CD4-positive, alpha-beta T cell (primary cell): ENCODE measurements at regions of chr11 and their contacts with region 1.

Region 1: GRCh38 chr11:269146-269890 is 8.9 kb upstream of the NLRP6 start:
- DNase-seq: peak in 12 of 14 experiments; percentile 29 to 89 (median 51)
- ATAC-seq: peak; percentile 76
- H3K4me3 ChIP-seq: peak overlapping the region; percentile 56
- H3K4me3 Mint-ChIP-seq: peak overlapping the region; percentile 91
- H3K27ac ChIP-seq: peak overlapping the region; percentile 74 to 84
- H3K27ac Mint-ChIP-seq: peak overlapping the region; percentile 94
- H3K4me1 ChIP-seq: peaks cover 34% of the 10 kb centered on the region
- H3K4me1 Mint-ChIP-seq: peaks cover 33% of the 10 kb centered on the region
- H3K27me3 ChIP-seq: no peaks in the 10 kb centered on the region
- H3K27me3 Mint-ChIP-seq: no peaks in the 10 kb centered on the region
- CTCF ChIP-seq: no peak

Region 2: DNA sequence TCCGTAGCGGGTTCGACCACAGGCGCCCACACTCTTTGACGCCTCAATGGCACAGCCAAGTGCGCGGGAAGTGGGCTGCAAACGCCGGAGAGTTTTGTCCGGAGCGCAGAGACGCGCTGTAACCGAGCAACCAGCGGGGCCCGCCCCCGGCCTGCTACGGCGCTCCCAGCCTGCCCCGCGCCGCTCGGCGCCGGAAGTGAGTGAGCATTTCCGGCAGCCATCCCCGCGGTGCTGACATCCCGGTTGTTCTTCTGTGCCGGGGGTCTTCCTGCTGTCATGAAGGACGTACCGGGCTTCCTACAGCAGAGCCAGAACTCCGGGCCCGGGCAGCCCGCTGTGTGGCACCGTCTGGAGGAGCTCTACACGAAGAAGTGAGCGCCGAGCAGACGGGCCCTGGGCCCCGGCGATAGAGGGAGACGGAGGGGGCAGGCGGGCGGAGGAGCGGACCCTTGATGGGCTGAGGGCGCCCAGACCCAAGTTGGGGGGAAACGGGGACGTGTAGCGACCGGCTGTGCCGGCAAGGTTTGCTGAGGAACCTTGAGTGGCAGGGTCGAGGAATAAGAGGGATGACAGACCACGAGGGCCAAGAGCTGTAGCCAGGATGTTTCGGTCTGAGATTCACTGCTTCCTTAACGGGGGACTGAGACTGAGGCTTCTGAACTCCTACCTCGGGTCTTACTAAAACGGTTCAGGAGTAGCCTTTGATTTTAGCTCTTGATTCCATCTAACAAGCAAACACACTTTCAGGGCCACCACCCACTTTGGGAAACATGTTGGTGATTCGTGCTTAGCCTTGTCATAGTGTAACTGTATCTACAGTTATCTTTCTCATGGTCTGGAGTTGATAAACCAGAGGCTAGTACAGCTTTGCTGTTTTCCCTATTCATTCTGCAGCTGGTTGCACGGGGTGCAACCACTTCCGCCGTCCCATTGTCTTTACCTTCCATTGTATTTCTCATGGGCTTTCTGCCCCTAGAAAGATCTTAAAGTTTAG is 32.2 kb before region 1 on chr11 and contains the start of gene PSMD13:
- CTCF ChIA-PET with region 1: interaction called, 3 read pairs
- POLR2A ChIA-PET with region 1: interaction called, 12 read pairs
- intact Hi-C with region 1: loop called in 1 of 2 experiments (anchors 1 kb)
- DNase-seq: peak; percentile 76 to 94 (median 84)
- ATAC-seq: peak; percentile 79
- H3K4me3 ChIP-seq: peak within 1 kb of the TSS; percentile 91
- H3K4me3 Mint-ChIP-seq: peak within 1 kb of the TSS; percentile 100
- H3K27ac ChIP-seq: peak within 1 kb of the TSS; percentile 97 to 100
- H3K27ac Mint-ChIP-seq: peak within 1 kb of the TSS; percentile 91
- H3K4me1 ChIP-seq: peaks cover 27% of the 10 kb centered on the region
- H3K4me1 Mint-ChIP-seq: peaks cover 55% of the 10 kb centered on the region
- H3K27me3 ChIP-seq: no peaks in the 10 kb centered on the region
- H3K27me3 Mint-ChIP-seq: no peaks in the 10 kb centered on the region
- CTCF ChIP-seq: peak; percentile 31
- total RNA-seq, gene PSMD13: 56.9 to 57.8 TPM

Region 3: DNA sequence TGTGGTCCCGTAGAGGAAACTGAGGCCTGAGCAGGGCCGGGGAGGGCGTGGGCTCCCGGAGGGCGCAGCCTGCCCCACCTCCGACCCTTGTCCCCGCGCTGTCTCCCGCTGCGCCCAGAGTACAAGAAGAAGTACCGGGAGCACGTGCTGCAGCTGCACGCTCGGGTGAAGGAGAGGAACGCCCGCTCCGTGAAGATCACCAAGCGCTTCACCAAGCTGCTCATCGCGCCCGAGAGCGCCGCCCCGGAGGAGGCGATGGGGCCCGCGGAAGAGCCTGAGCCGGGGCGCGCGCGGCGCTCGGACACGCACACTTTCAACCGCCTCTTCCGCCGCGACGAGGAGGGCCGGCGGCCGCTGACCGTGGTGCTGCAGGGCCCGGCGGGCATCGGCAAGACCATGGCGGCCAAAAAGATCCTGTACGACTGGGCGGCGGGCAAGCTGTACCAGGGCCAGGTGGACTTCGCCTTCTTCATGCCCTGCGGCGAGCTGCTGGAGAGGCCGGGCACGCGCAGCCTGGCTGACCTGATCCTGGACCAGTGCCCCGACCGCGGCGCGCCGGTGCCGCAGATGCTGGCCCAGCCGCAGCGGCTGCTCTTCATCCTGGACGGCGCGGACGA is 10.8 kb after region 1 on chr11:
- CTCF ChIA-PET with region 1: interaction called, 4 read pairs
- POLR2A ChIA-PET with region 1: interaction called, 185 read pairs
- intact Hi-C with region 1: loop called in 1 of 2 experiments (anchors 2 kb)
- DNase-seq: peak in 10 of 14 experiments; percentile 37 to 78 (median 51)
- ATAC-seq: peak; percentile 69
- H3K4me3 ChIP-seq: peak overlapping the region; percentile 53
- H3K4me3 Mint-ChIP-seq: peak overlapping the region; percentile 92
- H3K27ac ChIP-seq: no peak overlapping the region
- H3K27ac Mint-ChIP-seq: peak overlapping the region; percentile 81
- H3K4me1 ChIP-seq: peaks cover 56% of the 10 kb centered on the region
- H3K4me1 Mint-ChIP-seq: peaks cover 61% of the 10 kb centered on the region
- H3K27me3 ChIP-seq: peaks cover 10 to 18% of the 10 kb centered on the region in 2 experiments
- H3K27me3 Mint-ChIP-seq: peaks cover 12% of the 10 kb centered on the region
- CTCF ChIP-seq: no peak

Region 4: DNA sequence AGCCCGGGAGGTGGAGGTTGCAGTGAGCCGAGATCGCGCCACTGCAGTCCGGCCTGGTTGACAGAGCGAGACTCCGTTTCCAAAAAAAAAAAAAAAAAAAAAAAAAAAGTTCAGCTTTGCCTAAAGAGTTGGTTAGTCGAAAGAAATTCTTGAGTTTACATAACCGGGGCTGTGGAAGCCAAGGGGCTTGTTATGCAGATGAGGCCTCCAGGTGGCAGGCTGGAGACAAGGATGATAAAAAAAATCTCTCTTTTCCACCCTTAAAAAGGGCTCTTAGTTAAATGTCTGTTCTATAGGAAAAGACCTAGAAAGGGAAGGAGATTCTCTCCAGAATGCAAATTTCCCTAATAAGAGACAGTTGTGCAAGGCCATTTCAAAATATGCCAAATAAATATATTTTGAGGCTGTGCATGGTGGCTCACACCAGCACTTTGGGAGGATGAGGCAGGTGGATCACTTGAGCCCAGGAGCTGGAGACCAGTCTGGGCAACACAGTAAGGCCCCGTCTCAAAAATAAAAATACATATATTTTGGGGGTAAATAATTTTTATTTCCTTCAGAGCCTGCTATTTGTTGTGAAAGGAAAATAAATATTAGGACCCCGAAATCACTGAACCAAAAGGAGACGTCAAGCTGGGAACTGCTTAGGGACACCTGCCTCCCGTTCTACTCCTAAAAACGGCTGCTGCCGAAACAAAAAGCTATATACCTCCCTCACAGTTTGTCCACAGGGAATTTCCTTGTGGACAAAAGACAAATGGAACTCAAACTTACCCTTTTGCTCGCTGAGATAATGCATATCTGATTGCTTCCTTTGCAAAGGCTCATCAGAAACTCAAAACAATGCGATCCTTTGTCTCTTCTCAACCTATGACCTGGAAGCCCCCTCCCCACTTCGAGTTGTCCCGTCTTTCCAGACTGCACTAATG is 35.9 kb after region 1 on chr11:
- CTCF ChIA-PET with region 1: interaction called, 4 read pairs
- POLR2A ChIA-PET with region 1: interaction called, 12 read pairs
- intact Hi-C with region 1: loop called in 1 of 2 experiments (anchors 5 kb)
- DNase-seq: peak in 9 of 14 experiments; percentile 52 to 87 (median 63)
- ATAC-seq: peak; percentile 37
- H3K4me3 ChIP-seq: no peak overlapping the region
- H3K4me3 Mint-ChIP-seq: peak overlapping the region; percentile 85
- H3K27ac ChIP-seq: no peak overlapping the region
- H3K27ac Mint-ChIP-seq: peak overlapping the region; percentile 96
- H3K4me1 ChIP-seq: peaks cover 50% of the 10 kb centered on the region
- H3K4me1 Mint-ChIP-seq: peaks cover 39% of the 10 kb centered on the region
- H3K27me3 ChIP-seq: no peaks in the 10 kb centered on the region
- H3K27me3 Mint-ChIP-seq: no peaks in the 10 kb centered on the region
- CTCF ChIP-seq: peak; percentile 80

Region 5: GRCh38 chr11:342328-342727 is 73.0 kb after region 1 on chr11:
- CTCF ChIA-PET with region 1: no interaction called
- POLR2A ChIA-PET with region 1: no interaction called
- intact Hi-C with region 1: no loop called
- DNase-seq: no peak
- ATAC-seq: no peak
- H3K4me3 ChIP-seq: no peak overlapping the region
- H3K4me3 Mint-ChIP-seq: no peak overlapping the region
- H3K27ac ChIP-seq: no peak overlapping the region
- H3K27ac Mint-ChIP-seq: no peak overlapping the region
- H3K4me1 ChIP-seq: peaks cover 8% of the 10 kb centered on the region
- H3K4me1 Mint-ChIP-seq: peaks cover 11% of the 10 kb centered on the region
- H3K27me3 ChIP-seq: no peaks in the 10 kb centered on the region
- H3K27me3 Mint-ChIP-seq: no peaks in the 10 kb centered on the region
- CTCF ChIP-seq: no peak

Region 6: GRCh38 chr11:355581-356458 is 86.5 kb after region 1 on chr11:
- CTCF ChIA-PET with region 1: no interaction called
- POLR2A ChIA-PET with region 1: interaction called, 12 read pairs
- intact Hi-C with region 1: no loop called
- DNase-seq: peak; percentile 59 to 94 (median 88)
- ATAC-seq: peak; percentile 64
- H3K4me3 ChIP-seq: peak overlapping the region; percentile 55
- H3K4me3 Mint-ChIP-seq: peak overlapping the region; percentile 83
- H3K27ac ChIP-seq: peak overlapping the region; percentile 92 to 95
- H3K27ac Mint-ChIP-seq: no peak overlapping the region
- H3K4me1 ChIP-seq: peaks cover 31% of the 10 kb centered on the region
- H3K4me1 Mint-ChIP-seq: peaks cover 45% of the 10 kb centered on the region
- H3K27me3 ChIP-seq: no peaks in the 10 kb centered on the region
- H3K27me3 Mint-ChIP-seq: no peaks in the 10 kb centered on the region
- CTCF ChIP-seq: no peak

Region 7: DNA sequence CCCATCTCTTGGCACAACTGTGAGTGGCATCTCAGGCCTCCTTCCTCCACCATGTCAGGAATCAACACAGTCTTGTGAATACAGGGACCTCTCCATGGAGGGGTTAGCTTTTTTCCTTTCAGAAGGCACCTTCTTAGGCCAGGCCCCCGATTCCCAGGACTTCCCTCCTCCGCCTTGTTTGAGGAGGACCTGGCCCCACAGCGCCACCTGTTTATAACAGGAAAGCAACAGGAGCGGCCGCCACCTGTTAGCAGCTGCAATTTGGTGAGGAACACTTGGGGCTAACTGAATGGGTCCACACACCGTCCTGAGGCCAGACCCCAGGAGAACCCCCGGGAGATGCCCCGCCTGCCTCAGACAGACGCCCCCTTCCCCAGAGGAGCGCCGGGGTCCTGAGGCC is 120.9 kb after region 1 on chr11:
- CTCF ChIA-PET with region 1: no interaction called
- POLR2A ChIA-PET with region 1: no interaction called
- intact Hi-C with region 1: no loop called
- DNase-seq: no peak
- ATAC-seq: no peak
- H3K4me3 ChIP-seq: no peak overlapping the region
- H3K4me3 Mint-ChIP-seq: no peak overlapping the region
- H3K27ac ChIP-seq: no peak overlapping the region
- H3K27ac Mint-ChIP-seq: no peak overlapping the region
- H3K4me1 ChIP-seq: peaks cover 13% of the 10 kb centered on the region
- H3K4me1 Mint-ChIP-seq: peaks cover 10% of the 10 kb centered on the region
- H3K27me3 ChIP-seq: no peaks in the 10 kb centered on the region
- H3K27me3 Mint-ChIP-seq: no peaks in the 10 kb centered on the region
- CTCF ChIP-seq: no peak

Region 8: GRCh38 chr11:416757-417621 is 147.7 kb after region 1 on chr11:
- CTCF ChIA-PET with region 1: no interaction called
- POLR2A ChIA-PET with region 1: interaction called, 17 read pairs
- intact Hi-C with region 1: no loop called
- DNase-seq: peak in 10 of 14 experiments; percentile 19 to 71 (median 48)
- ATAC-seq: peak; percentile 13
- H3K4me3 ChIP-seq: peak overlapping the region; percentile 96
- H3K4me3 Mint-ChIP-seq: peak overlapping the region; percentile 90
- H3K27ac ChIP-seq: peak overlapping the region; percentile 48 to 75
- H3K27ac Mint-ChIP-seq: peak overlapping the region; percentile 78
- H3K4me1 ChIP-seq: peaks cover 48% of the 10 kb centered on the region
- H3K4me1 Mint-ChIP-seq: peaks cover 34% of the 10 kb centered on the region
- H3K27me3 ChIP-seq: no peaks in the 10 kb centered on the region
- H3K27me3 Mint-ChIP-seq: no peaks in the 10 kb centered on the region
- CTCF ChIP-seq: no peak

Region 9: GRCh38 chr11:506238-506994 is 237.1 kb after region 1 on chr11:
- CTCF ChIA-PET with region 1: no interaction called
- POLR2A ChIA-PET with region 1: interaction called, 13 read pairs
- intact Hi-C with region 1: no loop called
- DNase-seq: peak; percentile 93 to 99 (median 97)
- ATAC-seq: peak; percentile 67
- H3K4me3 ChIP-seq: peak overlapping the region; percentile 78
- H3K4me3 Mint-ChIP-seq: peak overlapping the region; percentile 97
- H3K27ac ChIP-seq: peak overlapping the region; percentile 100
- H3K27ac Mint-ChIP-seq: peak overlapping the region; percentile 100
- H3K4me1 ChIP-seq: peaks cover 53% of the 10 kb centered on the region
- H3K4me1 Mint-ChIP-seq: peaks cover 24% of the 10 kb centered on the region
- H3K27me3 ChIP-seq: no peaks in the 10 kb centered on the region
- H3K27me3 Mint-ChIP-seq: peaks cover 4% of the 10 kb centered on the region
- CTCF ChIP-seq: no peak